ENCODE measurements at regions of chr5 and their contacts with region 1.

Region 1: GRCh38 chr5:55903121-55903701 is 52.1 kb downstream of the IL31RA start:
- DNase-seq: peak; percentile 13
- ATAC-seq: no peak
- H3K4me3 ChIP-seq: no peak overlapping the region
- H3K27ac ChIP-seq: no peak overlapping the region
- H3K4me1 ChIP-seq: no peaks in the 10 kb centered on the region
- H3K27me3 ChIP-seq: no peaks in the 10 kb centered on the region
- CTCF ChIP-seq: no peak
- POLR2A ChIP-seq: no peak
- RAD21 ChIP-seq: no peak

Region 2: DNA sequence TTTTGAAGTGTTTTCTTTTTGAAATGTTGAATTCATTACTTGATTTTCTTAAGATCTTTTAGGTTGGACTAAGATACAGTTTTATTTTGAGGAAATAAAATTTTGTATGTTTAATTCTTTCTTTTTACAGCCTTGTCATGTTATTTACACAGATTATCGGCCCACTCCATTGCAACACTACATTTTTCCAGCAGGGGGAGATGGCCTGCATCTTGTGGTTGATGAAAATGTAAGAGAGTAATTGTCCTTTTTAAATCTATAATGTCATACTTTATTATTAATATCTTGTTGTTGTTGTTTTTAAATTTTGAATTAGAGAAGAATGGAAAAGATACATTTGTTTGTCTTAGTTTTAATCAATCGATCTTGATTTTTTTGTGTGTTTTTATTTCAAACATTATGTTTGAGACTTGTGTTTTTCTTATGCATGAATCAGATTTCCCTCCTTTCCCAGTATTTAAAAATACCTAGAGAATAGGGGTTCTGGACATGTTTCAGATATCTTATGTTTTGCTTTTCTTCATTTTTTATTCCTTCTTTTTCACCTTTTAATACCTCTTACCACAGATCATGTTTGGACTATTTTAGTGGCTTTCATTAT is 558.7 kb before region 1 on chr5:
- CTCF ChIA-PET with region 1: no interaction called
- POLR2A ChIA-PET with region 1: no interaction called
- dilution Hi-C with region 1: no loop called
- in situ Hi-C with region 1: loop called (anchors 25 kb)
- intact Hi-C with region 1: no loop called
- DNase-seq: peak; percentile 70
- ATAC-seq: peak; percentile 83
- H3K4me3 ChIP-seq: no peak overlapping the region
- H3K27ac ChIP-seq: no peak overlapping the region
- H3K4me1 ChIP-seq: no peaks in the 10 kb centered on the region
- H3K27me3 ChIP-seq: no peaks in the 10 kb centered on the region
- CTCF ChIP-seq: peak; percentile 86
- POLR2A ChIP-seq: no peak
- RAD21 ChIP-seq: peak; percentile 66

Measured in IMR-90 (cell line).